PC-9 (cell line): ENCODE measurements at regions of chr21 and their contacts with region 1.

Region 1: GRCh38 chr21:43789276-43790009 is at the start of gene RRP1:
- DNase-seq: peak; percentile 56 to 93
- H3K4me3 ChIP-seq: peak within 1 kb of the TSS; percentile 94
- H3K27ac ChIP-seq: peak within 1 kb of the TSS; percentile 81
- H3K4me1 ChIP-seq: peaks cover 15% of the 10 kb centered on the region
- H3K27me3 ChIP-seq: no peaks in the 10 kb centered on the region
- CTCF ChIP-seq: peak; percentile 83
- total RNA-seq, gene RRP1: 24.9 and 28.0 TPM in 2 replicates

Region 2: DNA sequence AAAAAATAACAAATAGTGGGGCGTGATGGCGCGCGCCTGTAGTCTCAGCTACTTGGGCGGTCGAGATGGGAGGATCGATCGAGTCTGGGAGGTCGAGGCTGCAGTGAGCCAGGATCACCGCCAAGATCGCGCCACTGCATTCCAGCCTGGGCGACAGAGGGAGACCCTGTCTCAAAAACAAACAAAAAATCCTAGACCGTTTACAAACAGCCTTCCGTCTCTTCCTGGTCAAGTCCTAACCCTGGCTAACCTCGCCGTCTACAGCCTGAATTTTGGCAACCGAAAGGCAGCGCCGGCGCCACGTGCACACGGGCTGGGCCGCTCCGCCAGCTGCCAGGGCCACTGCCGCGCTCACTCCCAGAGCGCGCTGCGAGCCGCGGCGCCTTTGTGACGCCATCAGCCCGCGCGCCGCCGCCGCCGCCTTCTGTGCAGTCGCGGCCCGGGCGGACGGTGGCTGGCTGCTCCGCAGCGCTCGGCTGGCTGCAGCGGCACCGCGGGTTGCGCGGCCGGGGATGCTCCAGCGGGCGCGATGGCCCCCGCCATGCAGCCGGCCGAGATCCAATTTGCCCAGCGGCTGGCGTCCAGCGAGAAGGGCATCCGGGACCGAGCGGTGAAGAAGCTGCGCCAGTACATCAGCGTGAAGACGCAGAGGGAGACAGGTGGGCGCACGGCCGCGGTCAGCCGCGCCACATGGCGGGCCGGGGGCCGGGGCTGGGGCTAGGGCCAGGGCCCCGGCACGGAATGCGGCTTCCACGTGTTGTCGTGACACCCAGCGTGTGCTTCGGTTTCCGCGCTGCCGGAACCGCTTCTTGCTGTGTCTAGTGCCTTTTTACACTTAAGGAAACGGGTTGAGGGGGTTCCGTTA is 130.1 kb before region 1 on chr21 and contains the starts of genes HSF2BP and RRP1B:
- CTCF ChIA-PET with region 1: no interaction called
- POLR2A ChIA-PET with region 1: no interaction called
- intact Hi-C with region 1: loop called (anchors 10 kb)
- DNase-seq: peak; percentile 55 to 73
- H3K4me3 ChIP-seq: peak within 1 kb of the TSS; percentile 91
- H3K27ac ChIP-seq: peak within 1 kb of the TSS; percentile 65
- H3K4me1 ChIP-seq: peaks cover 30% of the 10 kb centered on the region
- H3K27me3 ChIP-seq: no peaks in the 10 kb centered on the region
- CTCF ChIP-seq: no peak
- total RNA-seq, gene HSF2BP: 4.6 and 7.3 TPM in 2 replicates
- total RNA-seq, gene RRP1B: 26.1 and 26.3 TPM in 2 replicates

Region 3: DNA sequence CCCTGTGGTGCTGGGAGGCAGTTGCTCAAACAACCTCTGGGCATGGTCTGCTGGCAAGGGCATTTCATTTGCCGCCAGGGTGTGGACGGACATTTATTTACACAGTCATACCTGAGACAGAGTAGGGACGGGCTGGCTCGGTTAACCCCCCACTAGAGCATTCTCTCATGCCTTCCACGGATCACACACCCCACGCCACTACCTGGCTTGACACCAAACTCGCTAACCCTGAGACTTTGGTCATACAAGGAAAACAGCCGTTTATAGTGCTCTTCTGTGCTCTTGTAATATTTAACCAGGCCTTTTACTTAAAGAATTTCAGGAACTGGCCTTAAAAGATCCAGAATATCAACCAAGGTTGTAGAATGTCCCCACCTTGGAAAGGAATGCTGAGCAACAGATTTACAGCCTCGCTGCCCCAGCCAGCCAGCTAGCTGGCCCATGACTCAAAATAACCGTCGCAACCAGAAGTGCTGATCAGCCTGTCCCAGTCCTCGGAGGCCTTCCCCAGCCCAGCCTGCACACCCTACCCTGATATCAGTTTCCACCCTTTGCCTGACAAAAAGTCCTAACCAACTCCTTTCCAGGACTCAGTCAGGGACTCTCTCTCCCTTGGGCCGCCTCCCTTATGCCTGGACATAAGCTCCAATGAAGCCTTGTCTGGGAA is 77.0 kb before region 1 on chr21:
- CTCF ChIA-PET with region 1: no interaction called
- POLR2A ChIA-PET with region 1: no interaction called
- intact Hi-C with region 1: loop called (anchors 5 kb)
- DNase-seq: peak; percentile 84 to 94
- H3K4me3 ChIP-seq: peak overlapping the region; percentile 72; the same call in 1 of the 2 replicates
- H3K27ac ChIP-seq: peak overlapping the region; percentile 100
- H3K4me1 ChIP-seq: peaks cover 29% of the 10 kb centered on the region
- H3K27me3 ChIP-seq: no peaks in the 10 kb centered on the region
- CTCF ChIP-seq: no peak

Region 4: DNA sequence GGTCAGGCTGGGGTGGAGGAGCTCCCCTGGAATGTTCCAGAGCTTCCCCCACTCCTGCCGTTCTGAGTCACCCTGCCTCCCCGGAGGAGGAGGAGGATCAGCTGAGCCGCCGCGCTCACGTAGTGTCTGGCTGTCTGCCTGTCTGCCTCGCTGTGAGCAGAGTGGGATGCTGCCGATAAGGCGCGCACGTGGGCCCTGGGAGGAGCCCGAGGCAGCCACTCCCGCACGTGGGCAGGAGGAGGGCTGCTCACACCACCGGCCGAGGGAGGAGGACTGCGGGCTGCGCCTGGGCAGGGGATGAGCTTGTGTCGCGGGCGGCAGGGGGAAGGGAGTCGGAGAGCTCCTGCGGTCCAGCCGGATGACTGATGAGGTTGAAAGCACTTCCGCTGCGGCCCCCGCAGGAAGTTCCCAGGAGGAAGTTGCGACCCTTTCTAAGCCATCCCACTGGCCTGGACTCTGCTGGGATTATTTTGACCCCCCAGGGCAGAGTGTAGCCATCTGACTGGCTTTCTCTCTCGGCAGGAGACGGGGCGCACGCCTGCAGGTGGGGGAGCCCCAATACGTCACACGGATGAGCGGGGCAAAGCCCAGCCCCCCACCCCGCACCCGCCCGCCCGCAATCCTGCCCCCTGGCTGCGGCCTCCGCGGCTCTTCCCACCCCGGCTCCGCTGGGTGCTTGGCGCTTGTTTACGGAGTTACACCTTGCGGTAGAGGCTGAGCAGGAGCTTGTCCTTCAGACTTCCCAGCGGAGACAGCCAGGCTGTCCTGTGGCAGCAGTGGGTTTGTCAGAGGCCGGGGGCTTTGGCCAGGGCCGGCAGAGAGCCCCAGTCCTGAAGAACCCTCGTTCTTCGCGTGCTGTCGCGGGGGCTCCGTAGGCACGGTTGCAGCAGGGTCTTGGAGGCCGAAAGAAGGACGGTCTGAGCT is 60.7 kb before region 1 on chr21:
- CTCF ChIA-PET with region 1: no interaction called
- POLR2A ChIA-PET with region 1: no interaction called
- intact Hi-C with region 1: loop called (anchors 5 kb)
- DNase-seq: peak; percentile 78 to 87
- H3K4me3 ChIP-seq: peak overlapping the region; percentile 44; the same call in 1 of the 2 replicates
- H3K27ac ChIP-seq: peak overlapping the region; percentile 80
- H3K4me1 ChIP-seq: peaks cover 56% of the 10 kb centered on the region
- H3K27me3 ChIP-seq: no peaks in the 10 kb centered on the region
- CTCF ChIP-seq: no peak

Region 5: DNA sequence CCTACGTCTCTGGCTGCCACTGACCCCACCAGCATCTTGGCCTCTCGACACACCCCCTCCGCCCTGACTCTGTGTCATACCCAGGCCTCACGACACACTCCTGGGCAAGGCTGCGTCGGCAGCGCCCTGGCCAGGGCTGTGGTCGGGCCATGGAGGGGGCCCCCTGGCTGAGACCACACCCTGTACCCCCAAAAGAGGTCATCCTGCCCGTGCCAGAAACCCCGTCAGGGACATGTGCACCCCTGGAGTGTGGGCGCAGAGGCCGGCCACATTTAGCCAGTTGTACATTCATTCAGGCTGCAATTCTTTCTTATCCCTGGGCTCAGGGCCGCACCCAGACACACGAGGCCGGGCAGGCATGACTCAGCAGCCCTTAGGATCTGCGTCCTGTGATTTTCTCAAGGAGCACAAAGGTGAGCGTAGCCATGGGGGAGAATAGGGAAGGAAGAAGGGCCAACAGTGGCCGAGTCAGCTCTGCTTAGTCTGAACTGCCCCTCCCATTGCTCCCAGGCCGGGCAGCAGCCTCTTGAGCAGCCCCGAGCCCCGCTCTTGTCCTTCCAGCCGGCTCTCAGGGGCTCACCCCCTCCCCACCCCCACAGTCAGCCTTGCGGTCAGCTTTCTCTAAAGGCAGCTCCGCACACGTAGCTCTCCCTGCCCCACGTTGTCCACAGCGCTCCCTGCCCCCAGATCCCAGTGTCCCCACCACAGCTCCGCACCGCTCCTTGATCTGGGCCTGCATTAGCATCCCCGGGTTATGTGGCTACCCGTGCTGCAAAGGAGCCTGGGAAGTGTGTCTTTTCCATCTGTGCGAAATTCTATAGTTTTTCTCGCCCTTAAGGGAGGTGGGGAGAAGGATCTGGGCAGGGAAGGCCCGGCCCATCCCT is 21.2 kb before region 1 on chr21:
- CTCF ChIA-PET with region 1: no interaction called
- POLR2A ChIA-PET with region 1: no interaction called
- intact Hi-C with region 1: loop called (anchors 2 kb)
- DNase-seq: peak; percentile 84 to 93
- H3K4me3 ChIP-seq: peak overlapping the region; percentile 29; the same call in 1 of the 2 replicates
- H3K27ac ChIP-seq: peak overlapping the region; percentile 98
- H3K4me1 ChIP-seq: peaks cover 33% of the 10 kb centered on the region
- H3K27me3 ChIP-seq: no peaks in the 10 kb centered on the region
- CTCF ChIP-seq: no peak

Region 6: DNA sequence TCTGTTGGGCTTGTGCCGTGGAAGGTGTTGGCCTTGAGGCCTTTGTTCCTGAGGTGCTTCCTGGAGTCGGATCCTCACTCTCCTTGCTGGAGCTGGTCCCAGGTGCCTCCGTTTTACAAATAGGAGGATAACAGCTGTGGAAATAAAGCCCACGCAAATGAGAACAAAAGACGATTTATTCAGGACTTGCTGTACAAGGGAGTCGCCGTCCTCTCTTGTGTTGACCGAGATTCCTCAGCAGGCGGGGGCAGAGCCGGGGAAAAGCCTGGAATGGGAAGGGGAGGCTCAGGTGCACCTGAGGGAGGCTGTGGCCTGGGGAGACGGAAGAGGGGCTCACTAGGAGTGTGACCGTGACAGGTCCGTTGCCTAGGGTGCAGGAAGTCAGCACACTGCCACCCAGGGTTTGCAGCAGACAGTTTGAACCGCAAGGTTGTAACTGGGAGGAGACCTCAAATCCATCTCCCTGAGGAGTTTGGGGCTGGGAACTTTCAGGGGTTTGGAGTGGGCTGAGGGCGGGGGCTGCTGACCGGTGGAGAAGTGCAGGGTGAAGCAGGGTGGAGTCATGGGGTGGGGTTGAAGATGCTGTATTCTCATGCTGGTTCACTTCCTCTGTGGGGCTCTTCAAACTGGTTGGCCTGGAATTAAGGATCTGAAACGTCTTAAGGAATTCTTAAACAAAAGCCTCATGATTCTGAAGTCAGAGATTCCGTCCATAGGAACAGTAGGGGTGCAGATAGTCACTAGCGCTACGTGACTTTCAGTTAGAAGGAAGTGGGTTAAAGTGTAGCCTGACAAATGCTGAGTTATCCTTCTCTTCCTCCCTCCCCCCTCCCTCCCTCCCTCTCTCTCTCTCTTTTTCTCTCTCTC is 10.7 kb before region 1 on chr21:
- CTCF ChIA-PET with region 1: interaction called, 6 read pairs
- POLR2A ChIA-PET with region 1: no interaction called
- intact Hi-C with region 1: loop called (anchors 1 kb)
- DNase-seq: peak; percentile 61 to 98
- H3K4me3 ChIP-seq: peak overlapping the region; percentile 57
- H3K27ac ChIP-seq: peak overlapping the region; percentile 100
- H3K4me1 ChIP-seq: peaks cover 68% of the 10 kb centered on the region
- H3K27me3 ChIP-seq: no peaks in the 10 kb centered on the region
- CTCF ChIP-seq: no peak